Naive thymus-derived CD4-positive, alpha-beta T cell (primary cell): ENCODE measurements at regions of chr13 and their contacts with region 1.

Region 1: DNA sequence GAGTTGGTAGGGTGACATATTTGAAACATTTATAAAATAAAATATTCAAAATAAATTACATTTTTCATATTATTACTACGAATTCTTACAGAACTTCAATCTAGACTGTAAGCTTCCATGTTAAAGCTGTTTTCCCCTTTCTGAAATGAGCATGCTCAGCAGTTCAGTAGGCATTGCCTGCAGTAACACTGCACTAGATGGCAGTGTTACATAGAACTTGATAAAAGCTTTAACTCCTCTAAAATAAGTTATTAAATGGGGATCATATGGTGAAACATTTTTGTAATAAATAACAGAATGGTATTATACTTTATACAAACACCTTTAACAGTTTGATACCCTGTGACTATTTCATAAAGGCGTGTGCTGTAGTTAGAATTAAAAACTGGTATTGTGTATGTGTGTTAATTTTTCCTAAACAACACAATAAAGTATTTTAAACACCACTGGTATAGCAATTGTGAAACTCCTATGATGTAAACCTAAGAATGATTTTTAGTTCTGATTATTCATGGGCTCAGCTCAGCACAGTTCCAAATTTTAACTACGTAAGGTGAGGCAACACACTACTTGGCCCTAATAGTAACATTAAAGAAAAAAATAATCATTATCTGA is 11.6 kb upstream of the GPR18 start:
- DNase-seq: peak in 7 of 9 donors; percentile 51 to 71 (median 58)
- ATAC-seq: peak; percentile 84
- H3K4me3 ChIP-seq: no peak overlapping the region
- H3K4me3 Mint-ChIP-seq: peak overlapping the region in 1 of 10 donors; percentile 52
- H3K27ac ChIP-seq: peak overlapping the region; percentile 46
- H3K27ac Mint-ChIP-seq: peak overlapping the region in 8 of 9 donors; percentile 63 to 94 (median 92)
- H3K4me1 ChIP-seq: peaks cover 38 to 54% of the 10 kb centered on the region in 2 donors
- H3K4me1 Mint-ChIP-seq: peaks cover 35 to 73% (median 65%) of the 10 kb centered on the region in 7 donors
- H3K27me3 ChIP-seq: no peaks in the 10 kb centered on the region
- H3K27me3 Mint-ChIP-seq: no peaks in the 10 kb centered on the region

Region 2: GRCh38 chr13:98706446-98707110 is 563.2 kb before region 1 on chr13:
- CTCF ChIA-PET with region 1: no interaction called
- POLR2A ChIA-PET with region 1: no interaction called
- intact Hi-C with region 1: no loop called
- DNase-seq: no peak
- ATAC-seq: no peak
- H3K4me3 ChIP-seq: no peak overlapping the region
- H3K4me3 Mint-ChIP-seq: no peak overlapping the region
- H3K27ac ChIP-seq: no peak overlapping the region
- H3K27ac Mint-ChIP-seq: no peak overlapping the region
- H3K4me1 ChIP-seq: no peaks in the 10 kb centered on the region
- H3K4me1 Mint-ChIP-seq: peaks cover 0 to 3% (median 0%) of the 10 kb centered on the region in 7 donors
- H3K27me3 ChIP-seq: no peaks in the 10 kb centered on the region
- H3K27me3 Mint-ChIP-seq: peaks cover 5 to 37% (median 12%) of the 10 kb centered on the region in 5 donors

Region 3: GRCh38 chr13:98869408-98870090 is 400.2 kb before region 1 on chr13:
- CTCF ChIA-PET with region 1: interaction called, 4 read pairs
- POLR2A ChIA-PET with region 1: no interaction called
- intact Hi-C with region 1: loop called (anchors 5 to 10 kb)
- DNase-seq: peak in 1 of 9 donors; percentile 3
- ATAC-seq: no peak
- H3K4me3 ChIP-seq: no peak overlapping the region
- H3K4me3 Mint-ChIP-seq: no peak overlapping the region
- H3K27ac ChIP-seq: no peak overlapping the region
- H3K27ac Mint-ChIP-seq: peak overlapping the region in 3 of 9 donors; percentile 11 to 57 (median 23)
- H3K4me1 ChIP-seq: no peaks in the 10 kb centered on the region
- H3K4me1 Mint-ChIP-seq: peaks cover 0 to 33% (median 17%) of the 10 kb centered on the region in 7 donors
- H3K27me3 ChIP-seq: no peaks in the 10 kb centered on the region
- H3K27me3 Mint-ChIP-seq: no peaks in the 10 kb centered on the region

Region 4: GRCh38 chr13:99200432-99201167 is 69.1 kb before region 1 on chr13 and contains the start of gene UBAC2:
- CTCF ChIA-PET with region 1: interaction called, 242 read pairs
- POLR2A ChIA-PET with region 1: interaction called, 105 read pairs
- intact Hi-C with region 1: loop called (anchors 1 kb)
- DNase-seq: peak; percentile 95 to 99 (median 98)
- ATAC-seq: peak; percentile 88
- H3K4me3 ChIP-seq: peak within 1 kb of the TSS; percentile 74
- H3K4me3 Mint-ChIP-seq: peak within 1 kb of the TSS; percentile 90 to 100 (median 97)
- H3K27ac ChIP-seq: peak within 1 kb of the TSS; percentile 99
- H3K27ac Mint-ChIP-seq: peak within 1 kb of the TSS; percentile 92 to 98 (median 95)
- H3K4me1 ChIP-seq: peaks cover 38 to 51% of the 10 kb centered on the region in 2 donors
- H3K4me1 Mint-ChIP-seq: peaks cover 42 to 74% (median 61%) of the 10 kb centered on the region in 7 donors
- H3K27me3 ChIP-seq: no peaks in the 10 kb centered on the region
- H3K27me3 Mint-ChIP-seq: peaks cover 0 to 2% (median 0%) of the 10 kb centered on the region in 5 donors
- total RNA-seq, gene UBAC2: 63.3 to 114 (median 90.2) TPM

Region 5: DNA sequence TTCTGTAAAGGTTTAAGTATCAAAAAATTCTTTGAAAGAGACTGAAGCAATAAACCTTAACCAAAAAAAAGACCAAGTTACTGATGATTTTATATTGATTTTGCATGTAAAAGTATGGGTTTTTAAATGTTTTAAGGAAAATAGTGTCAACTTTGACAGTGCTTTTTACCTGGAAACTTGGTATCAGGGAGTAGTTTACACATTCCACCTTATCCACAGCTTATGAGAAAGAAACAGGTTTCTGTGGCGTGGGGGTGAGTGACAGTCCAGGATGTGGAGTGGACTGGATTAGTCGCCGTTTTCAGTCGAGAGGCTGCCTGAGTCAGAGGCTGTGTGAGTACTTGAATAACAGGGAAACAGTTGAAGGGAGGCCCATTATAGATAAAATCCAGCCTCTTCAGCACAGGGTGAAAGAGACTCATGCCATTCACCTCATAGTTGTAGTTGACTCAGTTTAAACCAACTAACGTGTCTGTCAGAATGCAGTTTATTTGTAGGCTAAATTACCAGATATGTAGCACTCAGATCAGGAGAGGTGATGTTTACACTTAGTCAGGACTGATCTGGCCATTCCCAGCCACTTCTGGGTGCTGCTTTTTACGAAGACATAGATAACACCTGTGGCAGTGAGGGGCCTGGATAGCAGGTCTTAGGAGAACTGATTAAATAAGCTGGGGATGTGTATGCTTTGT is 38.1 kb after region 1 on chr13:
- CTCF ChIA-PET with region 1: interaction called, 38 read pairs
- POLR2A ChIA-PET with region 1: interaction called, 94 read pairs
- intact Hi-C with region 1: loop called (anchors 2 to 5 kb)
- DNase-seq: peak in 2 of 9 donors; percentile 44 to 69
- ATAC-seq: peak; percentile 40
- H3K4me3 ChIP-seq: peak overlapping the region; percentile 89
- H3K4me3 Mint-ChIP-seq: peak overlapping the region; percentile 89 to 100 (median 94)
- H3K27ac ChIP-seq: peak overlapping the region; percentile 88
- H3K27ac Mint-ChIP-seq: peak overlapping the region; percentile 81 to 99 (median 95)
- H3K4me1 ChIP-seq: peaks cover 49 to 50% of the 10 kb centered on the region in 2 donors
- H3K4me1 Mint-ChIP-seq: peaks cover 56 to 84% (median 77%) of the 10 kb centered on the region in 7 donors
- H3K27me3 ChIP-seq: no peaks in the 10 kb centered on the region
- H3K27me3 Mint-ChIP-seq: no peaks in the 10 kb centered on the region

Region 6: GRCh38 chr13:99366075-99366987 is 96.6 kb after region 1 on chr13:
- CTCF ChIA-PET with region 1: interaction called, 15 read pairs
- POLR2A ChIA-PET with region 1: interaction called, 24 read pairs
- intact Hi-C with region 1: loop called in 1 of 2 experiments (anchors 1 kb)
- DNase-seq: peak in 2 of 9 donors; percentile 21 to 41
- ATAC-seq: peak; percentile 30
- H3K4me3 ChIP-seq: peak overlapping the region; percentile 6
- H3K4me3 Mint-ChIP-seq: peak overlapping the region in 9 of 10 donors; percentile 46 to 87 (median 78)
- H3K27ac ChIP-seq: peak overlapping the region; percentile 78
- H3K27ac Mint-ChIP-seq: peak overlapping the region; percentile 50 to 100 (median 99)
- H3K4me1 ChIP-seq: peaks cover 76 to 81% of the 10 kb centered on the region in 2 donors
- H3K4me1 Mint-ChIP-seq: peaks cover 55 to 100% (median 95%) of the 10 kb centered on the region in 7 donors
- H3K27me3 ChIP-seq: no peaks in the 10 kb centered on the region
- H3K27me3 Mint-ChIP-seq: no peaks in the 10 kb centered on the region

Region 7: GRCh38 chr13:99436686-99437416 is 167.1 kb after region 1 on chr13:
- CTCF ChIA-PET with region 1: interaction called, 258 read pairs
- POLR2A ChIA-PET with region 1: interaction called, 55 read pairs
- intact Hi-C with region 1: loop called (anchors 1 kb)
- DNase-seq: peak; percentile 92 to 98 (median 93)
- ATAC-seq: peak; percentile 69
- H3K4me3 ChIP-seq: peak overlapping the region; percentile 39
- H3K4me3 Mint-ChIP-seq: peak overlapping the region; percentile 17 to 79 (median 68)
- H3K27ac ChIP-seq: peak overlapping the region; percentile 83
- H3K27ac Mint-ChIP-seq: peak overlapping the region; percentile 67 to 99 (median 87)
- H3K4me1 ChIP-seq: peaks cover 43 to 48% of the 10 kb centered on the region in 2 donors
- H3K4me1 Mint-ChIP-seq: peaks cover 28 to 68% (median 59%) of the 10 kb centered on the region in 7 donors
- H3K27me3 ChIP-seq: no peaks in the 10 kb centered on the region
- H3K27me3 Mint-ChIP-seq: peaks cover 0 to 30% (median 0%) of the 10 kb centered on the region in 5 donors